Activated B cell treated with CpG ODN at 0.5 μM for 24 hours (primary cell): ENCODE measurements at regions of chr16 and their contacts with region 1.

Region 1: DNA sequence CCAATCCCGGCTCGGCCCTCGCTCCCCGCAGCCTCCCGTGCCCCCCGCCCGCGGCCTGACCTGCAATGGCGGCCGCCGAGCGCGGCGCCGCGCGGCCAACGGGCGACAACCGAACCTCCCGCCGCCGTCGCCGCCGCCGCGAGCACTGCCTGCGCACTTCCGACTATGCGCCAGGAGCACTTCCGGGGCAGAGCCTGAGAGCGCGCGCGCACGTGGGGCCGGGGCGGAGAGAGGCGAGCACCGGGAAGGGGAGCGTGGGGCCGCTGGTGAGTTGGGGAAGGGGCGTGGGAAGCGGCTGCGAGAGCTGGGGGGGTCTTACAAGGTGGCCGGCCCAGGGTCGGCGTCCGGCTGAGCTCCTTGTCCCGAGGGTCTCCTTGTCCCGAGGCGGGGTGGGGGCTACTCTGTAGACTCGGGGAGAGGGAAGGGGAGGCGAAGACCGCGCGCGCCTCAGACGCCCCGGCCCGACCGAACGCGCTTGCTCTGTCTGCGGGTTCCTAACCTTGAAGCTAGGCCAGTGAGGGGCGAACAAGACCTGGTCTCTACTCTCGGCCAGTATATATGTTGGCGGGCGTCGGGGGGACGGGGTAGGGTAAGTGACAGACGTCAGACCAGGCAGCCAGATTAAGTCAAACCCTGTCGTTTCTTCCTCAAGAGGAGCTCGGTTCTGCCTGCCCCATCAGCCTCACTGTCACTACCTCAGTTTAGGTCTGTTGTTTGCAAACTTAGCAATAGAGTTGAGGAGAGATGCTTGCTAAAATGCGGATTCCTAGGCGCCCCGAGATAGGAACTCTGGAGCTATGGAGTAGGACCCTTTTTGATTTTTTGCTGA is at the starts of genes CHTF8 and UTP4:
- DNase-seq: peak; percentile 89
- ATAC-seq: peak; percentile 85
- H3K4me3 Mint-ChIP-seq: peak within 1 kb of the TSS; percentile 94
- H3K27ac Mint-ChIP-seq: peak within 1 kb of the TSS; percentile 85
- H3K4me1 Mint-ChIP-seq: peaks cover 47% of the 10 kb centered on the region
- H3K27me3 Mint-ChIP-seq: no peaks in the 10 kb centered on the region
- CTCF ChIP-seq: no peak
- total RNA-seq, gene CHTF8: 134 and 143 TPM in 2 replicates
- total RNA-seq, gene UTP4: 53.5 and 55.3 TPM in 2 replicates

Region 2: GRCh38 chr16:68538880-68539701 is 593.5 kb before region 1 on chr16 and contains the start of gene ZFP90:
- CTCF ChIA-PET with region 1: no interaction called
- POLR2A ChIA-PET with region 1: interaction called, 3 read pairs
- intact Hi-C with region 1: loop called (anchors 1 kb)
- DNase-seq: peak; percentile 87
- ATAC-seq: peak; percentile 97
- H3K4me3 Mint-ChIP-seq: peak within 1 kb of the TSS; percentile 93
- H3K27ac Mint-ChIP-seq: peak within 1 kb of the TSS; percentile 93
- H3K4me1 Mint-ChIP-seq: peaks cover 14% of the 10 kb centered on the region
- H3K27me3 Mint-ChIP-seq: no peaks in the 10 kb centered on the region
- CTCF ChIP-seq: no peak
- total RNA-seq, gene ZFP90: 18.8 and 25.1 TPM in 2 replicates

Region 3: GRCh38 chr16:69330286-69331109 is 197.9 kb after region 1 on chr16 and contains the start of gene PDF:
- CTCF ChIA-PET with region 1: no interaction called
- POLR2A ChIA-PET with region 1: no interaction called
- intact Hi-C with region 1: loop called (anchors 1 kb)
- DNase-seq: peak; percentile 85
- ATAC-seq: peak; percentile 96
- H3K4me3 Mint-ChIP-seq: peak within 1 kb of the TSS; percentile 84
- H3K27ac Mint-ChIP-seq: peak within 1 kb of the TSS; percentile 71
- H3K4me1 Mint-ChIP-seq: peaks cover 38% of the 10 kb centered on the region
- H3K27me3 Mint-ChIP-seq: no peaks in the 10 kb centered on the region
- CTCF ChIP-seq: no peak
- total RNA-seq, gene PDF: 11.1 and 15.3 TPM in 2 replicates

Region 4: DNA sequence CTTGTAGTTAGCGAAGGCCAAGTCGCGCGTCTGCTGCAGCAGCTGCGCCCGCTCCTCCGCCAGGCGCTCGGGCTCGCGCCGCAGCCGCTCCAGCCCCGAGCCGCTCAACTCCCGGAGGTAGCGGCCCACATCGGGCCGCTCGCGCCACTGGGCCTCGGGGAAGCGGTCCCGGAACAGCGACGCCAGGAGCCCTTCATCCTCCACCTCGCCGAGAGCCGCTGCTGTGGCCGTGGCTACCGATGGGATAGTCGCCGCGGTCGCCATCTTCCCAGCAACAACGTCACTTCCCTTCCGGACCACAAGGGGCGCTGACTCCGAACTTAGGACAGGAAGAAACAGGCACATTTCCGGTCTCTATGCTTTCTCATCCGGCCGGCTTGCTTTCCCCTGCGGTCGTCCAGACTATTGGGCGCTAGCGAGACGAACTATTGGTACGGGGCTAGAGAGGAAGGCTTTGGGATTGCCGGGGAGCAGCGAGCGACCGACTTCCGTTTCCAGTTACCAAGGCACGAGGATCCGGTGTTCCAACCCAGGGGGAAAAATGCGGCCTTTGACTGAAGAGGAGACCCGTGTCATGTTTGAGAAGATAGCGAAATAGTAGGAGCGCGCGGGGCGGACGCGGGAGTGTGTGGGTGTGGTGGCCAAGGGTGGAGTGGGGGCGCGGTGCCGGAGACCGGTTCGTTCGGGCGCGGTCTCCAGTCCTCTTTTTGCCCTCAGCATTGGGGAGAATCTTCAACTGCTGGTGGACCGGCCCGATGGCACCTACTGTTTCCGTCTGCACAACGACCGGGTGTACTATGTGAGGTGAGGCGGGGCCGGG is 206.9 kb after region 1 on chr16 and contains the starts of genes COG8 and NIP7:
- CTCF ChIA-PET with region 1: no interaction called
- POLR2A ChIA-PET with region 1: interaction called, 4 read pairs
- intact Hi-C with region 1: loop called (anchors 2 kb)
- DNase-seq: peak; percentile 87
- ATAC-seq: peak; percentile 91
- H3K4me3 Mint-ChIP-seq: peak within 1 kb of the TSS; percentile 100
- H3K27ac Mint-ChIP-seq: peak within 1 kb of the TSS; percentile 99
- H3K4me1 Mint-ChIP-seq: peaks cover 39% of the 10 kb centered on the region
- H3K27me3 Mint-ChIP-seq: no peaks in the 10 kb centered on the region
- CTCF ChIP-seq: no peak
- total RNA-seq, gene COG8: 40.5 and 45.4 TPM in 2 replicates
- total RNA-seq, gene NIP7: 42.4 and 44.3 TPM in 2 replicates

Region 5: GRCh38 chr16:69553332-69553731 is 420.7 kb after region 1 on chr16:
- CTCF ChIA-PET with region 1: no interaction called
- POLR2A ChIA-PET with region 1: no interaction called
- intact Hi-C with region 1: no loop called
- DNase-seq: no peak
- ATAC-seq: no peak
- H3K4me3 Mint-ChIP-seq: no peak overlapping the region
- H3K27ac Mint-ChIP-seq: no peak overlapping the region
- H3K4me1 Mint-ChIP-seq: peaks cover 4% of the 10 kb centered on the region
- H3K27me3 Mint-ChIP-seq: no peaks in the 10 kb centered on the region
- CTCF ChIP-seq: no peak

Region 6: DNA sequence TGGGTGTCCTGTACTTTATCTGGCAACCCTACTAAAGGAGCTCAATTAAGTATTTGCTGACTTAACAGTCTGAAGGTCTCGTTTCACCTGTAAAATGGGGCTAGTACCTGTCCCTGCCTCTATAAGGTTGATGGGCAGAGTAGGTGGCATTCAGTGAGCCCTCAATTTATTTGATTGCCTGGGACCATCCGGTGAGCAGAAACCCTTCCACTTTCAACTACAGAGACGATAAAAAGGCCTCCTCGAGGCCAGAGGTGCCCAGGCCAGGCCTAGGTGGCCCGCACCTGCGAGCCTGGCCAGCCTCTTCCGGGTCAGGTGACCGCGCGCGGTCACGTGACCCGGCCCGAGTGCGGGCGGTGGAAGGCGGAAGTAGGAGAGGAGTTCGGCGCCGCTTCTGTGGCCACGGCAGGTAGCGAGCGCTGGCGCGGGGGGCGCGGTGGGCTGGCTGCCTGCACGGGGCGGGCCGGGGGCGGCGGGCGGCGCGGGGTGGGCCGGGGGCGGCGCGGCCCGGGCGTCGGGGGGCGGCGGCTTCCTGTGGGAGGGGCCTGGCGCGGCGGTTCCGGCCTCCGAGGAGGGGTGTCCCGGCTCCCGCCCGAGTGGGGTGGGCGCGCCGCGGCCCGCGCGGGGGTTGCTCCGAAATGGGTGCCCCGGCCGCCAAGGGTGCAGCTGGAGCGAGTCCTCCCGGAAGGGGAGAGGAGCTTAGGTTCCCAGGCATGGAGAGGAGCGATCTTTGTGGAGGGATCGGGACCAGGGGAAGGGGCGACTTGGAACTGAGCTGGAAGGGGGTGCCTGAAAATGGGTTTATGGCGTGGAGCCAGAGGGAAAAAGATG is 629.6 kb after region 1 on chr16 and contains the start of gene WWP2:
- CTCF ChIA-PET with region 1: no interaction called
- POLR2A ChIA-PET with region 1: interaction called, 10 read pairs
- intact Hi-C with region 1: loop called (anchors 10 kb)
- DNase-seq: peak; percentile 73
- ATAC-seq: peak; percentile 86
- H3K4me3 Mint-ChIP-seq: peak within 1 kb of the TSS; percentile 90
- H3K27ac Mint-ChIP-seq: peak within 1 kb of the TSS; percentile 96
- H3K4me1 Mint-ChIP-seq: peaks cover 36% of the 10 kb centered on the region
- H3K27me3 Mint-ChIP-seq: no peaks in the 10 kb centered on the region
- CTCF ChIP-seq: no peak
- total RNA-seq, gene WWP2: 69.4 and 80.8 TPM in 2 replicates